ENCODE measurements at regions of chr19 and their contacts with region 1.

Region 1: GRCh38 chr19:12294249-12295158 is at the start of gene ZNF44:
- DNase-seq: peak; percentile 94 to 97 (median 96)
- H3K4me3 ChIP-seq: peak within 1 kb of the TSS; percentile 76 to 91 (median 80)
- H3K4me3 Mint-ChIP-seq: peak within 1 kb of the TSS; percentile 100
- H3K27ac ChIP-seq: peak within 1 kb of the TSS; percentile 69 to 82
- H3K27ac Mint-ChIP-seq: peak within 1 kb of the TSS; percentile 96 to 100 (median 98)
- H3K4me1 ChIP-seq: peaks cover 8 to 11% of the 10 kb centered on the region in 2 donors
- H3K4me1 Mint-ChIP-seq: peaks cover 34% of the 10 kb centered on the region
- H3K27me3 ChIP-seq: no peaks in the 10 kb centered on the region
- H3K27me3 Mint-ChIP-seq: peaks cover 0 to 8% (median 6%) of the 10 kb centered on the region in 3 donors
- CTCF ChIP-seq: no peak
- polyA plus RNA-seq, gene ZNF44: 6.7 to 10.1 (median 9.7) TPM

Region 2: GRCh38 chr19:12162882-12163806 is 131.4 kb before region 1 on chr19 and contains the start of gene ZNF136:
- intact Hi-C with region 1: loop called (anchors 2 to 10 kb)
- DNase-seq: peak; percentile 89 to 96 (median 93)
- H3K4me3 ChIP-seq: peak within 1 kb of the TSS; percentile 69 to 95 (median 82)
- H3K4me3 Mint-ChIP-seq: peak within 1 kb of the TSS; percentile 97 to 98
- H3K27ac ChIP-seq: peak within 1 kb of the TSS; percentile 94 to 95
- H3K27ac Mint-ChIP-seq: peak within 1 kb of the TSS; percentile 97 to 99 (median 99)
- H3K4me1 ChIP-seq: peaks cover 14 to 16% of the 10 kb centered on the region in 2 donors
- H3K4me1 Mint-ChIP-seq: peaks cover 32% of the 10 kb centered on the region
- H3K27me3 ChIP-seq: no peaks in the 10 kb centered on the region
- H3K27me3 Mint-ChIP-seq: peaks cover 0 to 2% (median 0%) of the 10 kb centered on the region in 3 donors
- CTCF ChIP-seq: no peak
- polyA plus RNA-seq, gene ZNF136: 3.4 to 6.4 (median 5.8) TPM

Region 3: DNA sequence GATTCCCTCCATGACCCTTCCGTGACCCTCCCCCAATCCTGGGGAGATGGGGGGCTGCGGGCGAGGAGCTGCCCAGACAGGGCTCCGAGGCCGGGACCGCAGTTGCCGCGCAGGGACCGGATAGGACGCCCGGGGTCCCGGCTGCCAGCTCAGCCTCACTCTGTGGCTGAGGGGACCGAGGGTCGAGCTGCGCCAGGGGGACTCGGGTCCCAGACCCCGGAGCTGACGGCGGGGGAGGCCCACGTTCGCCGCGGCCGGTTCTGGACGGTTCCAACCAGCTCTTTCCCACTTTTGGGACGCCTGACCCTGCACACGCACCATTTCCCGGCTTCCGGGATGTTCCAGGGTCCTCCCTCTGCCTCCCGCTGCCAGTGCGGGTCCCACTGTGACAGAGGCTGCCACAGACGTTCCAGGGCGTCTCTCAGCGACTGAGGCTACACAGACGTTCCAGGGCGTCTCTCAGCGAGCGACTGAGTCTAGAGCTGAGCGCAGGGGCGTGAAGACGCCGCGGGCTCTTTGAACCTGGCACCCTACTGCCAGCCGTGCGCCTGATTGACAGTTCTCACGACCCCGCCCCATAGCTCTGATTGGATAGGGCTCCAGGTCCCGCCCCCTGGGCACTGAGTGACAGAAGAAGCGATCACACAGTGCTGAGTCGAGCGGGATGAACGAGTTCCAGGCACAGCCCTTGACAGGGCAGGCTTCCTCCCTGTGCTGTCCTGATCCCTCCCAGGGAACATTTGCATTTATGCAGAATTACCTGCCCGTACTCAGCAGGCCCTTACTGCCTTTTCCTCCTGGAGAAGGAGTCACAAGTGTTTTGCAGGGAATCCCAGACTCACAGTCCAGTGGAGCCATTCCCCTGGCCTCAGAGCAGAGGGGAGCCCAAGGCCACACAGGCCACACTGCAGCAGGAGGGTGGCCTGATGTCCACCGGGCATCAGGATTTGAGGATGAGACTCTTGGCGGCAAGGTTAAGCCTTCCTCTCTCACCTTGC is 39.0 kb after region 1 on chr19 and contains the start of gene ZNF563:
- intact Hi-C with region 1: loop called (anchors 5 kb)
- DNase-seq: peak; percentile 83 to 90 (median 85)
- H3K4me3 ChIP-seq: peak within 1 kb of the TSS; percentile 92 to 97 (median 94)
- H3K4me3 Mint-ChIP-seq: peak within 1 kb of the TSS; percentile 97 to 98
- H3K27ac ChIP-seq: peak within 1 kb of the TSS; percentile 59 to 80
- H3K27ac Mint-ChIP-seq: peak within 1 kb of the TSS; percentile 73 to 90 (median 87)
- H3K4me1 ChIP-seq: peaks cover 15 to 16% of the 10 kb centered on the region in 2 donors
- H3K4me1 Mint-ChIP-seq: peaks cover 20% of the 10 kb centered on the region
- H3K27me3 ChIP-seq: no peaks in the 10 kb centered on the region
- H3K27me3 Mint-ChIP-seq: peaks cover 0 to 2% (median 0%) of the 10 kb centered on the region in 3 donors
- CTCF ChIP-seq: no peak
- polyA plus RNA-seq, gene ZNF563: 0.09 to 0.99 (median 0.29) TPM